Heart left ventricle (tissue), 16 donors: ENCODE measurements at regions of chr1 and their contacts with region 1.

Region 1: GRCh38 chr1:218345673-218346390 is 696 bp downstream of the TGFB2 start:
- DNase-seq: peak; percentile 61 to 84 (median 70)
- ATAC-seq: peak; percentile 59 to 86 (median 78)
- H3K4me3 ChIP-seq: peak overlapping the region; percentile 56 to 87 (median 68)
- H3K27ac ChIP-seq: peak overlapping the region; percentile 42 to 91 (median 82)
- H3K4me1 ChIP-seq: peaks cover 0 to 43% (median 11%) of the 10 kb centered on the region in 12 donors
- H3K27me3 ChIP-seq: peaks cover 0 to 5% (median 0%) of the 10 kb centered on the region in 9 donors
- CTCF ChIP-seq: peak in 6 of 12 donors; percentile 1 to 23 (median 8)
- POLR2A ChIP-seq: no peak

Region 2: GRCh38 chr1:217647791-217648190 is 698.0 kb before region 1 on chr1:
- intact Hi-C with region 1: no loop called
- DNase-seq: no peak
- ATAC-seq: no peak
- H3K4me3 ChIP-seq: no peak overlapping the region
- H3K27ac ChIP-seq: no peak overlapping the region
- H3K4me1 ChIP-seq: no peaks in the 10 kb centered on the region
- H3K27me3 ChIP-seq: no peaks in the 10 kb centered on the region
- CTCF ChIP-seq: no peak
- POLR2A ChIP-seq: no peak

Region 3: DNA sequence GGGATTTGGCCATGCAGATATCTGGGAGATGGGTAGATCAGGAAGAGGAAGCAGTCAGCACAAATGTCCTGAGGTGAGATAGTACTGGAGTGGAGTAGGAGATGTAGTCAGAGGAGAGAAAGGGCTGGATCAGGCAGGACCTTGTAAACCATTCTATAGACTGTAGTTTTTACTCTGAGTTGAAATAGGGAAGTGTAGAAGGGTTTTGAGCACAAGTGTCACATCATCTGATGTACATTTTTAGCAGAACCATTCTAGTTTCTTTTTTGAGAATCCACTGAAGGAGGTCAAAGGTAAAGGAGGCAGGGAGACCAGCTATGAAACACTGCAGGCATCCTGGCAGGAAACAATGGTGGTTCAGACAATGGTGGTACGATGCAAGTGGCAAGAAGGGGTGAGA is 255.4 kb before region 1 on chr1:
- intact Hi-C with region 1: no loop called
- DNase-seq: no peak
- ATAC-seq: no peak
- H3K4me3 ChIP-seq: no peak overlapping the region
- H3K27ac ChIP-seq: no peak overlapping the region
- H3K4me1 ChIP-seq: no peaks in the 10 kb centered on the region
- H3K27me3 ChIP-seq: no peaks in the 10 kb centered on the region
- CTCF ChIP-seq: no peak
- POLR2A ChIP-seq: no peak

Region 4: GRCh38 chr1:218459878-218460711 is 114.3 kb after region 1 on chr1:
- intact Hi-C with region 1: loop called in 5 of 10 experiments (anchors 5 to 10 kb)
- DNase-seq: peak in 4 of 5 donors; percentile 16 to 57 (median 31)
- ATAC-seq: peak; percentile 84 to 90 (median 86)
- H3K4me3 ChIP-seq: peak overlapping the region in 4 of 12 donors; percentile 11 to 25 (median 14)
- H3K27ac ChIP-seq: peak overlapping the region; percentile 19 to 87 (median 77)
- H3K4me1 ChIP-seq: peaks cover 5 to 53% (median 39%) of the 10 kb centered on the region in 12 donors
- H3K27me3 ChIP-seq: no peaks in the 10 kb centered on the region
- CTCF ChIP-seq: no peak
- POLR2A ChIP-seq: no peak

Region 5: DNA sequence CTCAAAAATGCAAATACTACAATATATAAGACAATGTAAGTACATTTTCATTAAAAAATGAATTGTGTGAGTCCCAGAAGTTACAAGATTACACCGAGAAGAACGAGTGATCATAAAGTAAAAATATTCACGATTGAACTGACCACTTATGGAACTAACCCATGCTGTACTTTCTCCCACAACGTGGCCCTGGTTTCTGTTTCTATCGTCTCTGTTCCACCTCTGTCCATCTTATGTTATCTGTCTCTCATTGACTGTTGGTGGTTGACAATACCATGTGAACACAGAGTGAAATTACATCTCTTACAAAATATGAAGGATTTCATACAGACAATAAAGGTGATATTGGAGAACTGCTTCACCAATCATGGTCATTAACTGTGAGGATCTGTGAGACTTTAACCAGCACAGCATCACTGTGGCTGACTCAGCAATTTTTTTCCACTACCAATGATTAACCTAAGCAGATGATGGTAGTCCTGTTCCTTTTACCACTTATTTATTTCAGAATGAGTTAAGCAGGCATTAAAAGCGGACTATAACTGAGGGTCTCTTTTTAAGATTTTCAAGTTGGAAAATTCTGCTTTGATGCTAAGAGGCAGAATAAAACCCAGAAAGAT is 164.4 kb after region 1 on chr1:
- intact Hi-C with region 1: loop called in 2 of 10 experiments (anchors 5 to 10 kb)
- DNase-seq: no peak
- ATAC-seq: no peak
- H3K4me3 ChIP-seq: no peak overlapping the region
- H3K27ac ChIP-seq: no peak overlapping the region
- H3K4me1 ChIP-seq: no peaks in the 10 kb centered on the region
- H3K27me3 ChIP-seq: no peaks in the 10 kb centered on the region
- CTCF ChIP-seq: no peak
- POLR2A ChIP-seq: no peak

Region 6: DNA sequence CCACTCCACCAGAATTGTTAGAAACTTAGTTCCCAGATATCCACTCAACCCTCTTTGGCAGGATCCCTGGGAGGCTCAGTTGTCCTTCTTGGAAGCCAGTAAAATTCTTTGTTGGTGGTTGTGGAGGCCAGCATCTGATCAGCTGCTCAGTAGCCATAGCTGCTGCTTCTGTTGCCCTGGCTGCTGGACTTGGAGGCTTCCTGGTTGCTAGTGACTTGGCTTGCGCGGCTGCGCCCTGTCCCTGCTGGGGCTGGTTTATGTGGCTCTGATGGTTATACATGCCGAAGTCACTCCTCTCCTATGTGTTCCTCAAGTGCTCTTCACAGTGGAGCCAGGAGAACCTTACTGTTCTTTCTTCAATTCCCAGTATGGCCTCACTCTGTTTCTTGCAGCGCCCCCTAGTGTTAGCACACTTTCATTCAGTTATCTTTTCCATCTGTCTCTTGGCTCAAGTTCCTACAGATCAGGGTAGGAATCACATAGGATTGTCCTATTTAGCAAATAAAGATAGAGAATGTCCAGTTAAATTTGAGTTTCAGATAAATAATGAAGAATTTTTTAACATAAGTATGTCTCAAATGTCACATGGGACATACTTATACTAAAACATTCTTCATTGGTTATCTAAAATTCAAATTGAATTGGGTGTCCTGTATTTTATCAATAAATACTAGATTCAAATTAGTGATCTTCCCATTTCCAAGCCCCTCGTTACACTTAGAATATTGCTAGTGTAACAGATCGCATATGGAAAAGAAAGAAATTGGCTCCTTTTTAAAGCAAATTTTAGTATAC is 175.7 kb after region 1 on chr1:
- intact Hi-C with region 1: loop called in 5 of 10 experiments (anchors 5 to 10 kb)
- DNase-seq: peak in 4 of 5 donors; percentile 28 to 48 (median 32)
- ATAC-seq: no peak
- H3K4me3 ChIP-seq: no peak overlapping the region
- H3K27ac ChIP-seq: no peak overlapping the region
- H3K4me1 ChIP-seq: no peaks in the 10 kb centered on the region
- H3K27me3 ChIP-seq: no peaks in the 10 kb centered on the region
- CTCF ChIP-seq: peak; percentile 48 to 79 (median 68)
- POLR2A ChIP-seq: no peak

Region 7: DNA sequence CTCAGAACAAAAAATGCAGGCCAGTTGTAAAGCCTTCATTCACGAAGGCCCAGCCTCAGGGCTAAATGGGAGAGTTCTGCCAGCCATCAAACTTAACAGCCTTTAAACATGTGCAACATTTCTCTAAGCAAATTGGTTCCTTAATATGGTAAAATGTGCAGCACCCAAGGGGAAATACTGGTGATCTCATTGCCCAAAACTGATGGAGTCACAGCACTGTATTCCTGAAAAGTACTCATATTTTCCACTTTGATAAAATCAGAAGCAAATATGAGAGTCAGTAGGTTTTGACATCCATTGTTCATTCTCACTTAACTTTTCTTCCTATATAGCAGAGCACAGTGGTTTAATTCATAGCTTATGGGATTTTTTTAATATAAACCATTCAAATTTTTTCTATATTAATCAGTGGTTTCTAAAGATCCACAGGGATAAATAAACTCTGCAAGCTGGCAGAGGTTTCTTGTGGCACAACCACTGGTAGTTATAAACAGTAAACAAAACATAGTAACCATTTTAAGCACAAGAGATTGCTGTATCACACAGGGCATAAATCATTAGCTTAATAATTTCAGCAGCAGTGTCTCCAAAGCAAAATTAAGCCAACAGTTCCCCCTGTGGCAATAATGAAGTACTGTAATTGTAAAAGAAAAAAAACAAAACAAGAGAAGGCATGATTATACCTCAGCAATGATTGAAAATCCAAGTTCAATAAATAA is 721.0 kb after region 1 on chr1:
- intact Hi-C with region 1: loop called in 4 of 10 experiments (anchors 5 kb)
- DNase-seq: no peak
- ATAC-seq: peak in 3 of 4 donors; percentile 34 to 55 (median 55)
- H3K4me3 ChIP-seq: no peak overlapping the region
- H3K27ac ChIP-seq: peak overlapping the region in 3 of 12 donors; percentile 6 to 25 (median 8)
- H3K4me1 ChIP-seq: peaks cover 0 to 14% (median 1%) of the 10 kb centered on the region in 12 donors
- H3K27me3 ChIP-seq: no peaks in the 10 kb centered on the region
- CTCF ChIP-seq: peak; percentile 31 to 70 (median 56)
- POLR2A ChIP-seq: no peak

Region 8: GRCh38 chr1:219566951-219567947 is 1221.4 kb after region 1 on chr1:
- intact Hi-C with region 1: loop called in 1 of 10 experiments (anchors 10 kb)
- DNase-seq: no peak
- ATAC-seq: peak; percentile 67 to 75 (median 72)
- H3K4me3 ChIP-seq: no peak overlapping the region
- H3K27ac ChIP-seq: no peak overlapping the region
- H3K4me1 ChIP-seq: peaks cover 0 to 9% (median 1%) of the 10 kb centered on the region in 12 donors
- H3K27me3 ChIP-seq: peaks cover 0 to 3% (median 0%) of the 10 kb centered on the region in 9 donors
- CTCF ChIP-seq: peak; percentile 36 to 71 (median 54)
- POLR2A ChIP-seq: no peak